ENCODE measurements at regions of chr3 and their contacts with region 1.

Region 1: GRCh38 chr3:138118612-138119422 is 3.4 kb upstream of the DZIP1L start:
- DNase-seq: peak; percentile 74
- ATAC-seq: peak; percentile 56

Region 2: GRCh38 chr3:138068579-138069174 is 50.1 kb before region 1 on chr3:
- intact Hi-C with region 1: loop called (anchors 2 kb)
- DNase-seq: peak; percentile 84
- ATAC-seq: peak; percentile 97

Region 3: GRCh38 chr3:138197058-138197457 is 78.2 kb after region 1 on chr3:
- intact Hi-C with region 1: no loop called
- DNase-seq: no peak
- ATAC-seq: peak; percentile 84